Mammary epithelial cell (primary cell): ENCODE measurements at regions of chr16 and their contacts with region 1.

Region 1: DNA sequence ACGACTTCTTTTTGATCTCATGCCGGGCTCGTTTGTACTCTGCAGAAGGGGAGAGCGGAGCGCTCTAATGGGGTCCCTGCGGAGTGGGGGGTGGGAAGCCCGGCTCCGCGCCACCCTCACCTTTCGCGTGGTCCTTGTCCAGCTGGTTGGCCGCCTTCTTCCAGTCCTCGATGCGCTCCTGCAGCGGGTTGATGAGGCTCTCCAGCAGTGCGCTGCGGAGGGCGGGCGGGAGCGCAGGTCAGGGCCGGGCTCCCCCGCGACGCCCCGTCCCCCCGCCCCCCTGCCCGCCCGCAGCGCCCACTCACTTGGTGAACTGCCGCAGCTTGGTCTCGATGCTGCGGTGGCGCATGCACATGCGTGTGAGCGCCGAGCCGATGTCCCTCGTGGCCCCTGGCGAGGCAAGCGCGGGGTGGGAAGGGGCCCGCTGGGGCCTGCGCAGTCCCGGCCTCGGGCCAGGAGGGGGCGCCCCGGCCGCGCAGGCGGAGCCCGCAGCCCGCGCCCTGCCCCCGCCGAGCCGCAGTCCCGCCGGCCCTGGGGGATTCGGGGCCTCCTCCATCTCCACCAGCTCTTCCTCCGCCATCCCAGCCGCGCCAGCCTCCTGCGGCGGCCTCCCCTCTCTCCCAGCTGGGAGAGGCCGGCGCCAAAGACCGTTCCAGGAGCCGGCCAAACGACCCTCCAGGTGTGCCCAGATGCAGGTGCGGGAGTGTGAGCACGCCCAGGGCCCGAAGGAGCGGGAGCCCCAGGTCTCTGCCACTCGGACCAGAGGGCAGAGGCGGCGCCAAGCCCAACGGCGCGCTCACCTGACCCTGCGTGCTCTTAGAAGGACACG is 6.0 kb downstream of the MTSS2 start:
- DNase-seq: no peak
- H3K4me3 ChIP-seq: no peak overlapping the region
- H3K27ac ChIP-seq: no peak overlapping the region
- H3K4me1 ChIP-seq: peaks cover 46% of the 10 kb centered on the region
- H3K27me3 ChIP-seq: no peaks in the 10 kb centered on the region
- CTCF ChIP-seq: peak; percentile 23 to 41

Region 2: GRCh38 chr16:70438969-70439862 is 240.7 kb before region 1 on chr16 and contains the start of gene ST3GAL2:
- CTCF ChIA-PET with region 1: no interaction called
- dilution Hi-C with region 1: no loop called
- in situ Hi-C with region 1: no loop called
- intact Hi-C with region 1: no loop called
- DNase-seq: peak; percentile 88
- H3K4me3 ChIP-seq: peak within 1 kb of the TSS; percentile 53 to 66 (median 60)
- H3K27ac ChIP-seq: no peak within 1 kb of the TSS
- H3K4me1 ChIP-seq: peaks cover 20% of the 10 kb centered on the region
- H3K27me3 ChIP-seq: no peaks in the 10 kb centered on the region
- CTCF ChIP-seq: no peak
- total RNA-seq, gene ST3GAL2: 14.0 to 14.5 TPM

Region 3: DNA sequence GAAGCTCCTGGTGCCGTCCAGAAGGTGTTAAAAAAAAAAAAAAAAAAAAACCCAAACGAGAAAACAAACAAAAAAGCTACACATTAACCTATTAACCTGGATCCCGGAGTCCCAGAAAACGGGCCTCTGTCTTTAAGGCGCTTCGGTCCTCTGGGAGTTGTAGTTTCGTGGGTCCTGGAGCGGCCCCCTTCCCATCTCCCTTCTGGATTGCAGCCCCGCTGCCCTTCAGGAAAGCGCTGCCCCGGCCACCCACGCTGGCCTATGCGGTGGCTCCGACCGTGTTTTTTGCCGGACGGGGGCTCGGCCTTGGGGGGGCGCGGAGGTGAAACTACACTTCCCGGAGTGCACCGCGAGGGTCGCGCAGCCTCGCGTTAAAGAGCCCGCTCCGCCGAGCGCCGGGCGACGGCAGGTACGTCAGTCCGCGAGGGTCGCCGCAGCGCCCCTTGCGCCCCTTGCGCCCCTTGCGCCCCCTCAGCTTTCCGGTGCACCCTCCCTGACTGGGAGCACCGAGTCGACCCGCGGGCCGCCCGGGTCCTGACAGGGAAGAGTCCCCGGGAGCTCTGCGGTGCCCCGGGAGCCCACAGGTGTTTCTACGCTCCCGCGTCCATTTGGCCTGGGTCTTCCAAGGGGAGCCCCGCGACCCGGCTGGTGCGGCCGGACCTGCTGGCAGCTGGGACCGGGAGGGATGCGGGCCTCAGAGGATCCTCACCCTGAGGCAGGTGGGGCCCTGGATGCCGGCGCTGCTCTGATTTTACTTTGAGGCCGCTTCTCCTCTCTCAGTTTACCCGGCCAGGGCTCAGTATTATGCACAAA is 225.5 kb before region 1 on chr16 and contains the start of gene FCSK:
- CTCF ChIA-PET with region 1: no interaction called
- dilution Hi-C with region 1: no loop called
- in situ Hi-C with region 1: no loop called
- intact Hi-C with region 1: no loop called
- DNase-seq: peak; percentile 67
- H3K4me3 ChIP-seq: peak within 1 kb of the TSS; percentile 71 to 96 (median 75)
- H3K27ac ChIP-seq: peak within 1 kb of the TSS; percentile 93
- H3K4me1 ChIP-seq: peaks cover 5% of the 10 kb centered on the region
- H3K27me3 ChIP-seq: no peaks in the 10 kb centered on the region
- CTCF ChIP-seq: no peak
- total RNA-seq, gene FCSK: 12.2 to 12.7 TPM

Region 4: GRCh38 chr16:70561623-70562022 is 118.3 kb before region 1 on chr16:
- CTCF ChIA-PET with region 1: no interaction called
- dilution Hi-C with region 1: loop called (anchors 10 kb)
- in situ Hi-C with region 1: no loop called
- intact Hi-C with region 1: no loop called
- DNase-seq: peak; percentile 87
- H3K4me3 ChIP-seq: no peak overlapping the region
- H3K27ac ChIP-seq: peak overlapping the region; percentile 27
- H3K4me1 ChIP-seq: peaks cover 19% of the 10 kb centered on the region
- H3K27me3 ChIP-seq: no peaks in the 10 kb centered on the region
- CTCF ChIP-seq: no peak

Region 5: DNA sequence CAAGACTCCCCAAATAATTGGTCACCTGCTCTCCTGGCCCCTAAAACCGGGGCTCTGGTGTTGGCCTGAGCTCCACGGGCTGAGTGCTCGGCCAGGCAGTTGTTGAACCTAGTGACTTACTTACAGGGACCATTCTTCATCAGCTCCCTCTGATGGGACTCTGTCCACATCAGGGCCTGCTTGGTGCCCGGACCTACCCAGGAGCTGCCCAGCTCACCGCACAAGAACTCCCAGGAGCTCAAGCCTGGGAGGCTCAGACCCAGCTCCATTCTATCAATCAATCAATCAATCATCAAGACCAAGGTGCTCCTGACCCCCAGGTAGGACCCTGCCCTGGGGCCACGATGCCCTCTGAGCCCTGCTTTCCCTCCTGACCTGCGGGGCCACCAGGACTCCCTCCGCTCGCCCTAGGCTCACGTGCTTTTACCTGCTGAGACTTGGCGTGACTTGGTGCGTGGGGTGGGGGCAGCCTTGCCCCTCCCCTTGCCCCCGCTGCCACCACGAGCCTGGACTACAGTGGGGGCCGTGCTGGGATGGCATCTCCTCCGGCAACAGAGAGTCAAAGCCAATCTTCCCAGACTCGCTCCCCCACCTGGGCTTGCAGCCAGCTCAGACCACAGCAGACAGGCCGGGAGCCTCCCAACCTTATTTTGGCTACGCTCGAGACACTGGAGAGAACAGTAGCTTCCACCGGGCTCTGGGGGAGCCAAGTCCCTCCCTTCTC is 17.8 kb before region 1 on chr16:
- CTCF ChIA-PET with region 1: no interaction called
- dilution Hi-C with region 1: no loop called
- in situ Hi-C with region 1: no loop called
- intact Hi-C with region 1: no loop called
- DNase-seq: no peak
- H3K4me3 ChIP-seq: no peak overlapping the region
- H3K27ac ChIP-seq: no peak overlapping the region
- H3K4me1 ChIP-seq: no peaks in the 10 kb centered on the region
- H3K27me3 ChIP-seq: no peaks in the 10 kb centered on the region
- CTCF ChIP-seq: no peak

Region 6: GRCh38 chr16:70706946-70707465 is 27.1 kb after region 1 on chr16:
- CTCF ChIA-PET with region 1: no interaction called
- dilution Hi-C with region 1: no loop called
- in situ Hi-C with region 1: no loop called
- intact Hi-C with region 1: no loop called
- DNase-seq: peak; percentile 81
- H3K4me3 ChIP-seq: no peak overlapping the region
- H3K27ac ChIP-seq: peak overlapping the region; percentile 76
- H3K4me1 ChIP-seq: peaks cover 49% of the 10 kb centered on the region
- H3K27me3 ChIP-seq: no peaks in the 10 kb centered on the region
- CTCF ChIP-seq: no peak

Region 7: GRCh38 chr16:70737377-70738082 is 57.6 kb after region 1 on chr16:
- CTCF ChIA-PET with region 1: interaction called, 6 read pairs
- dilution Hi-C with region 1: no loop called
- in situ Hi-C with region 1: loop called in 1 of 2 experiments (anchors 5 kb)
- intact Hi-C with region 1: loop called (anchors 1 kb)
- DNase-seq: peak; percentile 67
- H3K4me3 ChIP-seq: no peak overlapping the region
- H3K27ac ChIP-seq: peak overlapping the region; percentile 6
- H3K4me1 ChIP-seq: peaks cover 31% of the 10 kb centered on the region
- H3K27me3 ChIP-seq: no peaks in the 10 kb centered on the region
- CTCF ChIP-seq: no peak

Region 8: GRCh38 chr16:70759666-70760065 is 79.8 kb after region 1 on chr16:
- CTCF ChIA-PET with region 1: no interaction called
- dilution Hi-C with region 1: loop called (anchors 5 kb)
- in situ Hi-C with region 1: loop called (anchors 10 kb)
- intact Hi-C with region 1: no loop called
- DNase-seq: no peak
- H3K4me3 ChIP-seq: no peak overlapping the region
- H3K27ac ChIP-seq: no peak overlapping the region
- H3K4me1 ChIP-seq: peaks cover 16% of the 10 kb centered on the region
- H3K27me3 ChIP-seq: no peaks in the 10 kb centered on the region
- CTCF ChIP-seq: no peak